H1 (cell line): ENCODE measurements at regions of chr2 and their contacts with region 1.

Region 1: DNA sequence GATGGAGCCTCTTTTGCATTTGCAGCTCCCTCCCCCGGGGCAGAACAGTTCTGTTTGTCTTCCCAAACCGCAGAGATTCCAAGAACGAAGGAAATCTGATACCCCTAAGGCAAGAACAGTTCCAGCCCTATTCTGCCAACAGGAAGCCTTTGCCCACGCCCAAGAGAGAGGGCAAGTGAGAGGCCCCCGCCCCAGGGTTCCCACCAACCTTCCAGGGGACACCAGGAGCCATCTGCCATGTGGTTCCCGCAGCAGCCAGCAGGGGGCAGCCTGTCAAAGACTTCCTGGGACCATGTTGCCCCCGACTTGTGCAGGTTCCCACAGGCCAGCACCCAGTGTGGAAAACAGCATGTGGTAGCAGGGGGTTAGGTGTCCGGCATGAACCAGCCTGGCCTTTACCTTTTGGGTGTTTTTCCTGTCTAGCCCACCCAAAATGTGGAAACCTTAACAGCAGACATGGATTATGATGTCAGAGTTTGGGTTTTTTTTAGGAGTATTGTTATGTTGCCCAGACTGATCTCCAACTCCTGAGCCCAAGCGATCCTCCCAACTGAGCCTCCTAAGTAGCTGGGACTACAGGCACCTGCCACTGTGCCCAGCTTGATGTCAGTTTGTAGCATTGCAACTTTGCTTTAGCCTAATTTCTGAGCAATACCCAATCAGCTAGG is 21.7 kb upstream of the EFHD1 start:
- DNase-seq: peak in 1 of 2 experiments; percentile 96
- H3K4me3 ChIP-seq: no peak overlapping the region
- H3K27ac ChIP-seq: no peak overlapping the region
- H3K4me1 ChIP-seq: no peaks in the 10 kb centered on the region
- H3K27me3 ChIP-seq: no peaks in the 10 kb centered on the region
- CTCF ChIP-seq: peak; percentile 76 to 92 (median 84)
- EP300 ChIP-seq: no peak
- POLR2A ChIP-seq: no peak
- RAD21 ChIP-seq: peak; percentile 58 to 72

Region 2: GRCh38 chr2:232592772-232593395 is 18.8 kb before region 1 on chr2:
- CTCF ChIA-PET with region 1: interaction called, 15 read pairs
- POLR2A ChIA-PET with region 1: no interaction called
- DNase-seq: no peak
- H3K4me3 ChIP-seq: no peak overlapping the region
- H3K27ac ChIP-seq: no peak overlapping the region
- H3K4me1 ChIP-seq: peaks cover 0 to 7% (median 0%) of the 10 kb centered on the region in 4 experiments; a peak in 2 of 7 replicates
- H3K27me3 ChIP-seq: no peaks in the 10 kb centered on the region
- CTCF ChIP-seq: peak in 1 of 3 experiments; percentile 12; a peak in 1 of 4 replicates
- EP300 ChIP-seq: no peak
- POLR2A ChIP-seq: no peak
- RAD21 ChIP-seq: no peak

Region 3: GRCh38 chr2:232623783-232624727 is 12.4 kb after region 1 on chr2:
- CTCF ChIA-PET with region 1: interaction called, 15 read pairs
- POLR2A ChIA-PET with region 1: interaction called, 4 read pairs
- DNase-seq: no peak
- H3K4me3 ChIP-seq: no peak overlapping the region
- H3K27ac ChIP-seq: no peak overlapping the region
- H3K4me1 ChIP-seq: peaks cover 0 to 2% (median 0%) of the 10 kb centered on the region in 4 experiments; a peak in 2 of 7 replicates
- H3K27me3 ChIP-seq: 0 out of 7 replicates have a peak, but pooled peaks cover 0 to 2% (median 0%) of the 10 kb centered on the region in 4 experiments
- CTCF ChIP-seq: no peak
- EP300 ChIP-seq: no peak
- POLR2A ChIP-seq: no peak
- RAD21 ChIP-seq: no peak

Region 4: GRCh38 chr2:232652505-232652851 is 40.8 kb after region 1 on chr2:
- CTCF ChIA-PET with region 1: interaction called, 11 read pairs
- POLR2A ChIA-PET with region 1: no interaction called
- DNase-seq: no peak
- H3K4me3 ChIP-seq: no peak overlapping the region
- H3K27ac ChIP-seq: no peak overlapping the region
- H3K4me1 ChIP-seq: no peaks in the 10 kb centered on the region
- H3K27me3 ChIP-seq: no peaks in the 10 kb centered on the region
- CTCF ChIP-seq: no peak
- EP300 ChIP-seq: no peak
- POLR2A ChIP-seq: no peak
- RAD21 ChIP-seq: no peak